ENCODE measurements at regions of chr11 and their contacts with region 1.

Region 1: GRCh38 chr11:86047275-86047991 is 21.5 kb downstream of the PICALM start:
- DNase-seq: peak in 5 of 14 experiments; percentile 9 to 64 (median 49)
- ATAC-seq: peak; percentile 45
- H3K4me3 ChIP-seq: no peak overlapping the region
- H3K4me3 Mint-ChIP-seq: peak overlapping the region; percentile 65
- H3K27ac ChIP-seq: peak overlapping the region in 1 of 2 donors; percentile 7
- H3K27ac Mint-ChIP-seq: peak overlapping the region; percentile 78
- H3K4me1 ChIP-seq: peaks cover 36% of the 10 kb centered on the region
- H3K4me1 Mint-ChIP-seq: peaks cover 95% of the 10 kb centered on the region
- H3K27me3 ChIP-seq: no peaks in the 10 kb centered on the region
- H3K27me3 Mint-ChIP-seq: no peaks in the 10 kb centered on the region
- CTCF ChIP-seq: no peak

Region 2: GRCh38 chr11:85759915-85760314 is 287.5 kb before region 1 on chr11:
- CTCF ChIA-PET with region 1: no interaction called
- POLR2A ChIA-PET with region 1: no interaction called
- intact Hi-C with region 1: no loop called
- DNase-seq: no peak
- ATAC-seq: no peak
- H3K4me3 ChIP-seq: no peak overlapping the region
- H3K4me3 Mint-ChIP-seq: no peak overlapping the region
- H3K27ac ChIP-seq: no peak overlapping the region
- H3K27ac Mint-ChIP-seq: no peak overlapping the region
- H3K4me1 ChIP-seq: peaks cover 41% of the 10 kb centered on the region
- H3K4me1 Mint-ChIP-seq: peaks cover 69% of the 10 kb centered on the region
- H3K27me3 ChIP-seq: no peaks in the 10 kb centered on the region
- H3K27me3 Mint-ChIP-seq: no peaks in the 10 kb centered on the region
- CTCF ChIP-seq: no peak

Region 3: DNA sequence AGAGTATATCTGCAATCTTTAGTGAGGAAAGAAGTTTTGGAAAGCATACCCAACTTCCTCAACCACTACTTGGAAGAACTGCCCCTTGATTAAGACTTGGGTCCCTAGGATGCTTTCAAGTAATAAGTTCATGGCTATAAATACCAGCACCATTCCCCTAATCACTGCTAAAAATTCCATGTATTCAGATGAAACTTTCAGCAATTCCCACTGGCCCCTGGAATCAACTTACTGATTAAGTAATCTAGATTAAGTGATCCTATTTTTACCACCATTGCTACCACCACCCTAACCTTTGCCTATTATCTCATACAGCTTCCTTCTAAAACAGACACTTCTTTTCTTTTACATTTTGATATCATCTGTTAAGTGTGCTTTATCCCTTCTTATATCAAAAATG is 10.9 kb after region 1 on chr11:
- CTCF ChIA-PET with region 1: interaction called, 7 read pairs
- POLR2A ChIA-PET with region 1: interaction called, 7 read pairs
- intact Hi-C with region 1: loop called (anchors 2 kb)
- DNase-seq: no peak
- ATAC-seq: no peak
- H3K4me3 ChIP-seq: no peak overlapping the region
- H3K4me3 Mint-ChIP-seq: peak overlapping the region; percentile 12
- H3K27ac ChIP-seq: no peak overlapping the region
- H3K27ac Mint-ChIP-seq: no peak overlapping the region
- H3K4me1 ChIP-seq: peaks cover 41% of the 10 kb centered on the region
- H3K4me1 Mint-ChIP-seq: peaks cover 87% of the 10 kb centered on the region
- H3K27me3 ChIP-seq: no peaks in the 10 kb centered on the region
- H3K27me3 Mint-ChIP-seq: no peaks in the 10 kb centered on the region
- CTCF ChIP-seq: no peak